ENCODE measurements at regions of chr6 and their contacts with region 1.

Region 1: GRCh38 chr6:39114704-39115599 is at the start of gene SAYSD1:
- DNase-seq: peak; percentile 92
- H3K4me3 Mint-ChIP-seq: peak within 1 kb of the TSS; percentile 95
- H3K27ac Mint-ChIP-seq: peak within 1 kb of the TSS; percentile 97
- H3K4me1 Mint-ChIP-seq: peaks cover 63% of the 10 kb centered on the region
- H3K27me3 Mint-ChIP-seq: no peaks in the 10 kb centered on the region
- total RNA-seq, gene SAYSD1: 12.1 and 12.9 TPM in 2 replicates

Region 2: GRCh38 chr6:37550191-37550965 is 1564.6 kb before region 1 on chr6:
- intact Hi-C with region 1: loop called (anchors 10 kb)
- DNase-seq: no peak
- H3K4me3 Mint-ChIP-seq: no peak overlapping the region
- H3K27ac Mint-ChIP-seq: no peak overlapping the region
- H3K4me1 Mint-ChIP-seq: peaks cover 41% of the 10 kb centered on the region
- H3K27me3 Mint-ChIP-seq: peaks cover 11% of the 10 kb centered on the region

Region 3: DNA sequence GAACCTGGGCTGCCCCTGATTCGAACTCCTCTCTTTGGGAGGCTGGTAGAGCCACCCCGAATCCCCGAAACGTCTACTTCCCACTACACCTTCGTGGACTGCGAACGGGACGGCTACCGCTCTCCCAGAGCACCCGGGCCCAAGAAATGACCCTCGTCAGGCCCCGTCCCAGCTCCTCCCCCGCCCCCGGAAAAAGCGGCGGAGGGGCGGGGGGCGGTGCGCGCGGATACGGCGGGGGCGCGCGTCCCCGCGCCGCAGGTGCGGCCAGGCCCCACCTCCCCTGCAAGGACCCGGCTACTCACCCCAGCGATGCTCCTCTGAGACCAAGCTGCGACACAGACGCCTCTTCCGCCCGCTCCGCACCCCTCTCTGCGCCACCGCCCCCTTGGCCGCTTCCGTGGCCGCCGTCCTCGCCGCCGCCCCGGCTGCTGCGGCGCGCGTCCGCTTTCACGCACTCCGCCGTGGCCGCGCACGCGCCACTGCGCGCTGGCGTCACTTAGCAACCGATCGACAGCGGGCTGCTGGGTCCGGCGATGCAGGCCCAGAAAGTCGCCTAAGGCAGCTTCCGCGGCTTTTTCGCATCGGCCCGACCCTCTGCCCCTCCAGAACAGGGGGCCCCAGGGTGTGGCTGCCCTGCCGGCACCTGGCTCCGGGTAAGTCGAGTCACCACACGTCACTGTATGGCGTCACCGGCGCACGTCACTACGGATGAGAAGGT is 475.3 kb before region 1 on chr6 and contains the start of gene BTBD9:
- intact Hi-C with region 1: loop called (anchors 2 kb)
- DNase-seq: peak; percentile 80
- H3K4me3 Mint-ChIP-seq: peak within 1 kb of the TSS; percentile 92
- H3K27ac Mint-ChIP-seq: peak within 1 kb of the TSS; percentile 91
- H3K4me1 Mint-ChIP-seq: peaks cover 47% of the 10 kb centered on the region
- H3K27me3 Mint-ChIP-seq: no peaks in the 10 kb centered on the region
- total RNA-seq, gene BTBD9: 14.5 and 16.4 TPM in 2 replicates

Region 4: DNA sequence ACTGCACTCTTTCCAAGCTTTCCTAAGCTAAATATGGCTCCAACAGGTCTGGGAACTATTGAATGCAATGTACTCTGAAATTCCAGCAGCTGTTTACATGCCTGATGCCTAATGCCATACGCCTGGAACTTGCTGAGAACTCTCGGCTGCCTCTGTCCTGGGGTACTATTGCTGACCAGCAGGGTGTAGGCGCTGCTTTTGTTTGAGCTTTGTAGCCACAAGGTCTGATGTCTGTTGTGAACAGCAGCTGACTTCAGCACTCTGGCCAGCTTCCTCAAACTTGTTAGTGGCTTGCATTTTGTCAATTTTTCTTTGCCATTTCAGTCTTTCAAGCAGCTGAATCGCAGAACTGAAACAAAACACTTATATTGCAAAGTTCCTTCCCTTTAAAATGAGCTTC is 26.6 kb before region 1 on chr6:
- intact Hi-C with region 1: loop called (anchors 1 kb)
- DNase-seq: no peak
- H3K4me3 Mint-ChIP-seq: no peak overlapping the region
- H3K27ac Mint-ChIP-seq: no peak overlapping the region
- H3K4me1 Mint-ChIP-seq: peaks cover 24% of the 10 kb centered on the region
- H3K27me3 Mint-ChIP-seq: peaks cover 55% of the 10 kb centered on the region

Region 5: GRCh38 chr6:39228992-39229767 is 114.2 kb after region 1 on chr6 and contains the start of gene KCNK5:
- intact Hi-C with region 1: loop called (anchors 1 kb)
- DNase-seq: peak; percentile 86
- H3K4me3 Mint-ChIP-seq: peak within 1 kb of the TSS; percentile 88
- H3K27ac Mint-ChIP-seq: peak within 1 kb of the TSS; percentile 94
- H3K4me1 Mint-ChIP-seq: peaks cover 54% of the 10 kb centered on the region
- H3K27me3 Mint-ChIP-seq: no peaks in the 10 kb centered on the region
- total RNA-seq, gene KCNK5: 36.7 and 38.7 TPM in 2 replicates

Region 6: GRCh38 chr6:41072676-41073623 is 1958.0 kb after region 1 on chr6 and contains the start of gene NFYA:
- intact Hi-C with region 1: loop called (anchors 2 kb)
- DNase-seq: peak; percentile 100
- H3K4me3 Mint-ChIP-seq: peak within 1 kb of the TSS; percentile 95
- H3K27ac Mint-ChIP-seq: peak within 1 kb of the TSS; percentile 99
- H3K4me1 Mint-ChIP-seq: peaks cover 66% of the 10 kb centered on the region
- H3K27me3 Mint-ChIP-seq: peaks cover 5% of the 10 kb centered on the region
- total RNA-seq, gene NFYA: 29.6 and 30.1 TPM in 2 replicates